GM13977 (cell line): ENCODE measurements at regions of chr4 and their contacts with region 1.

Region 1: GRCh38 chr4:11424000-11424399 is 4.7 kb downstream of the HS3ST1 start:
- DNase-seq: peak; percentile 63
- CTCF ChIP-seq: peak; percentile 63

Region 2: GRCh38 chr4:10140866-10141759 is 1282.9 kb before region 1 on chr4:
- in situ Hi-C with region 1: no loop called
- DNase-seq: no peak
- CTCF ChIP-seq: no peak

Region 3: DNA sequence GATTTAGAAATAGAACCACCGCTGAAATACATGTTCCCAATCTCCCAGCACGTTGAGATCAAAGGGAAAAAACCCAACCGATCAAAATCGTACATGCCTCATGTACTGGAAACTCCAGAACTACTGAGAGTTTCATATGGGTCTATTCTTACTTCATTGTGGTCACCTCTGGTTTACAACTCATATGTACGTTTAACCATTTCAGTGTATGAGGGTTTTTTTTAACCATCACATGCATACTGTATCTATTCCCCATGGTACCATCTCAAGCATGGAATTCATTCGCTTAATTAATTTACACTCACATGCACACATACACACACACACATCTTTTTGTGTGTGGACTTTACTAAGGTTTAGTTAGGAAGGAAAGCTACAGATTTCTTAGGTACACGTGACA is 693.4 kb before region 1 on chr4:
- in situ Hi-C with region 1: loop called (anchors 25 kb)
- DNase-seq: peak; percentile 55
- CTCF ChIP-seq: no peak

Region 4: GRCh38 chr4:11720292-11720691 is 296.3 kb after region 1 on chr4:
- in situ Hi-C with region 1: no loop called
- DNase-seq: peak; percentile 30
- CTCF ChIP-seq: peak; percentile 58